IMR-90 (cell line): ENCODE measurements at regions of chr7 and their contacts with region 1.

Region 1: GRCh38 chr7:142587578-142588191 is 161.6 kb upstream of the PRSS1 start:
- DNase-seq: peak; percentile 81
- ATAC-seq: peak; percentile 84
- H3K4me3 ChIP-seq: no peak overlapping the region
- H3K27ac ChIP-seq: no peak overlapping the region
- H3K4me1 ChIP-seq: peaks cover 7% of the 10 kb centered on the region
- H3K27me3 ChIP-seq: no peaks in the 10 kb centered on the region
- CTCF ChIP-seq: peak; percentile 99
- POLR2A ChIP-seq: no peak
- RAD21 ChIP-seq: peak; percentile 43

Region 2: DNA sequence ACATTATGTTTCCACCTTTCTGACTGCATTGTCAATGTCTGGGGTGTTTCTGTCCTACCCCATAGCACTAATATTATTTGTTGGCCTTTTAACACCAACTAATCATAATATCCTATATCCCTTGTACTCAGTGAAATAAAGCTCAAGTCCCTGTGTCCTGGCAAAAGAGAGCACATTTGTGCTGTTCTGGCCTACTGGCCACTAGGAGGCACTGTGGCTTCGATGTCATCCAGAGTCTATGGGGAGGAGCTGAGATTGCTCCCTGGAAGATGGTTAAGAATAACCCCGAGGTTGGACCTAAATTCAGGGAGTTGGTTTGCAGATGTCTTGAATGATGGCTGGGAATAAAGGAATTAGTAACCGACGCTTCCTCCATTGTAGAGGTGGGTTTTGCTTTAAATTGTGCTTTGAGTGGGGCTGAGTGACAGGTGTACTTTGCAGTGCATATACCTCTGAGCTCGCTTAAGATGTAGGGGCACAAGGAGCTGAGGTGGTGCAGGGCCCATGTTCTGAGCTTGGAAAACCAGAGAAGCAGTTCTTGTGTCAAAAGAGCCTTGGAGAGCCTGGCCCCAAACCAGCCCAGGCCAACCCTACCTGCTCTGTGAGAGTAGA is 29.6 kb before region 1 on chr7:
- CTCF ChIA-PET with region 1: interaction called, 10 read pairs
- POLR2A ChIA-PET with region 1: no interaction called
- dilution Hi-C with region 1: no loop called
- in situ Hi-C with region 1: no loop called
- intact Hi-C with region 1: no loop called
- DNase-seq: peak; percentile 72
- ATAC-seq: no peak; the same call in 1 of the 2 replicates
- H3K4me3 ChIP-seq: no peak overlapping the region
- H3K27ac ChIP-seq: peak overlapping the region; percentile 67; the same call in 1 of the 2 replicates
- H3K4me1 ChIP-seq: peaks cover 29% of the 10 kb centered on the region
- H3K27me3 ChIP-seq: no peaks in the 10 kb centered on the region
- CTCF ChIP-seq: peak; percentile 59
- POLR2A ChIP-seq: no peak
- RAD21 ChIP-seq: peak; percentile 49

Region 3: GRCh38 chr7:142603870-142604448 is 16.3 kb after region 1 on chr7:
- CTCF ChIA-PET with region 1: interaction called, 19 read pairs
- POLR2A ChIA-PET with region 1: no interaction called
- dilution Hi-C with region 1: no loop called
- in situ Hi-C with region 1: no loop called
- intact Hi-C with region 1: no loop called
- DNase-seq: peak; percentile 63
- ATAC-seq: peak; percentile 73
- H3K4me3 ChIP-seq: peak overlapping the region; percentile 39; the same call in 1 of the 2 replicates
- H3K27ac ChIP-seq: no peak overlapping the region
- H3K4me1 ChIP-seq: no peaks in the 10 kb centered on the region
- H3K27me3 ChIP-seq: 0 out of 2 replicates have a peak, but pooled peaks cover 3% of the 10 kb centered on the region
- CTCF ChIP-seq: peak; percentile 87
- POLR2A ChIP-seq: no peak
- RAD21 ChIP-seq: peak; percentile 82